MCF 10A (cell line): ENCODE measurements at regions of chr15 and their contacts with region 1.

Region 1: DNA sequence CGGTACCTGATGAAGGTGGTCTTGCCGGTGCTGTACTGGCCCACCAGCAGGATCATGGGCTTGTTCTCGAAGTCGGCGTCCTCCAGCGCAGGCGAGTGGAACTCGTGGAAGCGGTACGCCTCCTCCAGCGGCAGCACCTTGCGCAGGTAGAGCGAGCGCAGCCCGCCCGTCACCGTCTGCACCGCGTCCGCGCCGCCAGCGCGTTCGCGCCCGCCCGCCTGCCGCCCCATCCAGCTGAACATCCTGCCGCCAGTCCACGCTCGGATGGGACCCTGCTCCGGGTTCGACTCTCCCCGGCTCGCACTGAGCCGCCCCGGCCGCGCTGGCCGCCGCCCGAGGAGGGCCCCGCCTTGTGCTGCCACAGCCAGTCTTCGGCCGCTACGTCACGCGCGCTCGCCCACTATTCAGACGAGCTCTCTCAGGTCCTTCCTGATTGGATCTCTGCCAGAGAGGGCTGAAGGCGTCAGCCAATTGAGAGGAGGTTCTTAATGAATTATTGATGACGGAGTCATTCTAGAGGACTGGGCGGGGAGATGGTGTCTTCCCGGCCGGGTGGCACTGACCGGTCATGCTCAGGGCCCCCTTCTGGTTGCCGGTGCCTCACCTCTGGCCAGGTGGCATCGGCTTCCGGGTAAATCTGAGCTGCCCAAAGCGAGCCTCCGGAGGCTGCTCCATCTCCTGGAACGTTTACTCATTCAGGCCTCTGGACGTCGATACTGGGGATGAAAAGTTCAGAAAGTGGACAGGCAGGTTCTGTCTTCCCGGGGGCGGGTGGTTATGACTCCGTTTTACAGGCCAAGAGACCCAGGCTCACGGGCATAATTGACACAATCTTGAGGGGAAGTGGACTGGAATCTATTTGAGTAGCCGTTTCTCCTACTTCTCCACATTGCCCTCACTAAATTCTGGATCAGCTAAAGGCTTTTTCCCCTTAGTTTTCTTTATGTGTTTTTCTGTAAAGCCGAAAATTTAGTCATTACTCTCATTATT is at the start of gene EHD4:
- DNase-seq: peak; percentile 100
- H3K4me3 Mint-ChIP-seq: peak within 1 kb of the TSS; percentile 82
- H3K27ac Mint-ChIP-seq: peak within 1 kb of the TSS; percentile 83
- H3K4me1 Mint-ChIP-seq: peaks cover 40% of the 10 kb centered on the region
- H3K27me3 Mint-ChIP-seq: no peaks in the 10 kb centered on the region
- CTCF ChIP-seq: no peak
- total RNA-seq, gene EHD4: 24.2 and 27.1 TPM in 2 replicates

Region 2: GRCh38 chr15:41827880-41828806 is 144.4 kb before region 1 on chr15 and contains the start of gene JMJD7:
- CTCF ChIA-PET with region 1: no interaction called
- POLR2A ChIA-PET with region 1: interaction called, 6 read pairs
- intact Hi-C with region 1: loop called (anchors 5 kb)
- DNase-seq: peak; percentile 85
- H3K4me3 Mint-ChIP-seq: peak within 1 kb of the TSS; percentile 87
- H3K27ac Mint-ChIP-seq: peak within 1 kb of the TSS; percentile 76
- H3K4me1 Mint-ChIP-seq: peaks cover 13% of the 10 kb centered on the region
- H3K27me3 Mint-ChIP-seq: no peaks in the 10 kb centered on the region
- CTCF ChIP-seq: no peak
- total RNA-seq, gene JMJD7: 9.2 and 13.3 TPM in 2 replicates

Region 3: DNA sequence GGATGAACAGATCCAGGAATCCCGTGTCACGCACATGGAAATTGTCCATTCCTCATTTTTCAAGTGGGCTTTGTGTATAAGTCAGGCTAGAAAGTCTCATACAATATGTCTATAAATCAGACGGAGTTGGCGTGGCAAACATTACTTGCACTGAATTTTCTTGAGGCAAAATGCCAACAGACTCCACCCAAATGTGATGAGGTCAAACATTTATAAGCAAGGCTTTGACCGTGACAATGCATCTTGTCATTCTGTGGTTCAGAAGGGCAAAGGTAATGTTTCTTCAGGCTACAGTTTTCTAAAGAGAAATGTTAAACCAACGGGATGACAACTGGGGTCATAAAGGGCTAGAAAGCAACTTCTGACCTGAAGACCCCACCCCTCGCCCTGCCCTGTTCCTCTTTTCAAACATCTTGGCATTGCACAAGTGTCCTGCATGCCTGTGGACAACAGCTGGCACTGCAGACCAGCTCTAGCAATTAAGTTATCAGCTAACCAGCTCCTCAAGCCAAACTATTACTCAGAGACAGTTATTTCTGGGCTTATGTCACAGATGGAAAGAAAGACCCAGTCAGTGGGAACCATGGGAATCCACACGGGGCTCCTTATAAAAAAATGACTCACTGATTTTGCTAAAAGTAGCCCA is 42.2 kb before region 1 on chr15:
- CTCF ChIA-PET with region 1: interaction called, 10 read pairs
- POLR2A ChIA-PET with region 1: interaction called, 25 read pairs
- intact Hi-C with region 1: loop called (anchors 1 kb)
- DNase-seq: peak; percentile 91
- H3K4me3 Mint-ChIP-seq: no peak overlapping the region
- H3K27ac Mint-ChIP-seq: peak overlapping the region; percentile 52
- H3K4me1 Mint-ChIP-seq: peaks cover 45% of the 10 kb centered on the region
- H3K27me3 Mint-ChIP-seq: no peaks in the 10 kb centered on the region
- CTCF ChIP-seq: no peak

Region 4: DNA sequence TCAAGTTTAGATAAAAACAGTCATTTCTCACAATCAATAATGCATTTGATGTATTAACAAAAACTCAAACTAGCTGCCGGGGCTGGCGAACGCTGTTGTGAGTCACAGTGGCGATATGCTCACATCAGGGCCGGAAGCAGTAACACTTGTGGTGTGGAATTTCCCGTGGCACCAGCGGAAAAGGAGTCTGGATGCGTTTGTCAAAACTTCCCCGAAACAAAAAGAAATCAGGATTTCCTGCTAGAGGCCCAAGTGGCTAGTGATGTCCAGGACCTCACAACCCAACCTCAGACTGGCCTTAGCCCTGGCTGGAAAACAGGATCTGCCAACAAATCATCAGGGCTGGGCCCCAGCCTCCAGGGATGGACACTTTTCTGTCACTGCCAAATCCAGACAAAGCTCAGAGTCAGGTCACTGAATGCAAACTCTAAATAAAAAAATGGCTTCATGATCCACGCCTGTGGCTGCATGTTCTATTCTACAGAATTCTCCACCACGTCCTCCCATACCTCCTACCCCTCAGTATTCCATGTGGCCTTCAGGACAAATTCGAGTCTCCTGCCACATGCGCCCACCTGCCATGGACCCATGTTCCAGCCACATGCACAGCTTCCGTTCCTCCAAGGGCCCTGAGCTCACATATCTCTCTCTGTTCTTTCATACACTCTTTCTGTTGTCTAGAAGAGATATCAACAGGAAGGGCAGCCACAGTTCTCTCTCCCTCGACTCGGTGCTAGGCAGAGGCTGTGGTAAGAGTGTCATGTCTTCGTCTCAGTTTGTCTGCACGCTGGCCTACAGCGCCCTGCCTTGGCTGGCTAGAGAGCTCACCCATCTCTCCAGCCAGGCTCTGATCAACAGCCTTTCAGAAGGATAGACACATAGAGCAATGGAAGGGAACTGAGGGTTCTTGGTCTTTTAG is 35.6 kb before region 1 on chr15:
- CTCF ChIA-PET with region 1: interaction called, 5 read pairs
- POLR2A ChIA-PET with region 1: interaction called, 25 read pairs
- intact Hi-C with region 1: no loop called
- DNase-seq: no peak
- H3K4me3 Mint-ChIP-seq: no peak overlapping the region
- H3K27ac Mint-ChIP-seq: no peak overlapping the region
- H3K4me1 Mint-ChIP-seq: peaks cover 43% of the 10 kb centered on the region
- H3K27me3 Mint-ChIP-seq: no peaks in the 10 kb centered on the region
- CTCF ChIP-seq: no peak

Region 5: GRCh38 chr15:41952013-41952563 is 20.5 kb before region 1 on chr15:
- CTCF ChIA-PET with region 1: interaction called, 4 read pairs
- POLR2A ChIA-PET with region 1: interaction called, 11 read pairs
- intact Hi-C with region 1: no loop called
- DNase-seq: no peak
- H3K4me3 Mint-ChIP-seq: no peak overlapping the region
- H3K27ac Mint-ChIP-seq: peak overlapping the region; percentile 31
- H3K4me1 Mint-ChIP-seq: no peaks in the 10 kb centered on the region
- H3K27me3 Mint-ChIP-seq: no peaks in the 10 kb centered on the region
- CTCF ChIP-seq: no peak

Region 6: GRCh38 chr15:41961001-41961518 is 11.5 kb before region 1 on chr15:
- CTCF ChIA-PET with region 1: interaction called, 3 read pairs
- POLR2A ChIA-PET with region 1: interaction called, 24 read pairs
- intact Hi-C with region 1: no loop called
- DNase-seq: no peak
- H3K4me3 Mint-ChIP-seq: no peak overlapping the region
- H3K27ac Mint-ChIP-seq: peak overlapping the region; percentile 7
- H3K4me1 Mint-ChIP-seq: peaks cover 14% of the 10 kb centered on the region
- H3K27me3 Mint-ChIP-seq: no peaks in the 10 kb centered on the region
- CTCF ChIP-seq: no peak